Right cardiac atrium (tissue), 5 donors: ENCODE measurements at regions of chr7 and their contacts with region 1.

Region 1: DNA sequence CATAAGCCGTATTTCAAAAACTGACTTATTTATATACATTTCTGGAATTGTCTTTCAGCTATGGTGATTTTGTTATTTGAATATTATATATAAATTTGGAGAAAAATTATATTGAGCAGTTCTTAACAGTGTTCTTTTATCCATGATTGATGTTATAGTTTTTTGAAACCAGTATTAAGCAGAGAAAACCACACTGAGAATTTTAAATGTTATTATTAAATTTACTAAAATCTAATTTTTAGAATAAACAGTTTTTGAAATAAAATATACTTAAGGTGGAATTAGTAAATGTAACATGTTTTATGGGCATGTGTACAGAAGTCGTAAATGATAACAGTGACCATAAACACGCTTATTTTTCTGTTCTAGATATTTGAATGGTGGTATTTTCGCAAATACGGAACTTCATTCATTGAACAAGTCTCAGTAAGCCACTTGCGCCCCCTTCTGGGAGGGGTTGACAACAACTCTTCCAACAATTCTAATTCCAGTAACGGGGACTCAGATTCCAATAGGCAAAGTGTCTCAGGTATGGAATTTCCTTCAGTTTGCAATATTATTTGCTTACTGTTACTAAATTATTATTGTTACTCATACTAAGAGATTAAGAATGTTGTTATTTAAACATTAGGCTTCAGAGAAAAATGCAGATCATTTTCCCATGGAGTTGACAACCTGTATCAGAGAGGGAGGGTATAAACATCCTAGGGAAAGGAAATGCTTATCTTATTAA is 166.1 kb downstream of the ST7 start:
- DNase-seq: peak; percentile 76 to 91 (median 86)
- ATAC-seq: peak; percentile 51 to 63
- H3K4me3 ChIP-seq: no peak overlapping the region
- H3K27ac ChIP-seq: no peak overlapping the region
- H3K4me1 ChIP-seq: no peaks in the 10 kb centered on the region
- H3K27me3 ChIP-seq: no peaks in the 10 kb centered on the region

Region 2: DNA sequence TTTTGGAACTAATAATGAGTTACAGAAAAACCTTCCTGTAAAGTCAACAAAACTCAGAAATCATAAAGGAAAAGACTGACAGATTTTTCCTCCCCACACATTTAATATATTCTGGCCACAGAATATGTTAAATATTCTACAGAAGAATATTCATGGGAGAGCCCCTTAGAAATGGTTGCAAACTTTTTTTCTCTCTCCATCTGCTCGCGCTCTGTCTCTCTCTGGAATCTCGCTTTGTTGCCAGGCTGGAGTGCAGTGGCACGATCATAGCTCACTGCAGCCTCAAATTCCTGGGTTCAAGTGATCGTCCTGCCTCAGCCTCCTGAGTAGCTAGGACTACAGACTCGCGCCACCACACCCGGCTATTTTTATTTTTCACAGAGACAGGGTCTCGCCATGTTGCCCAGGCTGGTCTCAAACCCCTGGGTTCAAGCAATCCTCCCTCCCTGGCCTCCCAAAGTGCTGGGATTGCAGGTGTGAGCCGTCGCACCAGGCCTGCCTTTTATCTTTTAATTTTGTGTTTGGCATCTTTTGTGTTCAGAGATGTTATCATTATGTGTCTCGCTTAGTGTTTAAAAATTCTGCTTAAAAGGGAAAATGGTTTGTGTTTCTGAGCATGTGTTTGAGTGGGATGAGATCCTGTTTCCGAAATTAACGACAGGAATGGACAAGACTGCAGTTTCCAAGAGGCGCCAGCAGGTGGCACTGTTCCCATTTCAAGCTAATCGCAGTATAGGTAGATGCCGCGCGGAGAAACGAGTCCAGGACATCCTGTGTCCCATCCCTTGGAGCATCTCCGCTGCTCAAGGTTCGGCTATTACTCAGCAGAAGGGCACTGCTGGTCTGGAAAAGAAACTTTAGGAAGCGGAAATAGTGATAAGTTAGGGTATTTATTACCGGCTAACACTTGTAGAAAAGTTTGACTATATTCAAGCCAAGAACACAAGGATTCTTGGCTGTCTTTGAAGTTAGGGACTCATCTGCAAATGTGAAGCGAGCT is 189.1 kb before region 1 on chr7:
- intact Hi-C with region 1: loop called in 3 of 4 experiments (anchors 2 to 5 kb)
- DNase-seq: peak; percentile 82 to 92 (median 89)
- ATAC-seq: peak; percentile 88 to 90
- H3K4me3 ChIP-seq: no peak overlapping the region
- H3K27ac ChIP-seq: no peak overlapping the region
- H3K4me1 ChIP-seq: no peaks in the 10 kb centered on the region
- H3K27me3 ChIP-seq: no peaks in the 10 kb centered on the region

Region 3: GRCh38 chr7:117014673-117015133 is 104.7 kb before region 1 on chr7:
- intact Hi-C with region 1: loop called in 1 of 4 experiments (anchors 10 kb)
- DNase-seq: peak; percentile 53 to 74 (median 68)
- ATAC-seq: peak; percentile 94 to 95
- H3K4me3 ChIP-seq: peak overlapping the region; percentile 27
- H3K27ac ChIP-seq: no peak overlapping the region
- H3K4me1 ChIP-seq: peaks cover 6% of the 10 kb centered on the region
- H3K27me3 ChIP-seq: no peaks in the 10 kb centered on the region